ENCODE measurements at regions of chr2 and their contacts with region 1.

Region 1: GRCh38 chr2:43086451-43087221 is 139.8 kb downstream of the ZFP36L2 start:
- DNase-seq: peak; percentile 99
- H3K4me3 ChIP-seq: no peak overlapping the region
- H3K27ac ChIP-seq: peak overlapping the region; percentile 94
- H3K4me1 ChIP-seq: peaks cover 70% of the 10 kb centered on the region
- H3K27me3 ChIP-seq: no peaks in the 10 kb centered on the region
- CTCF ChIP-seq: no peak

Region 2: GRCh38 chr2:42987112-42987922 is 99.3 kb before region 1 on chr2:
- CTCF ChIA-PET with region 1: no interaction called
- dilution Hi-C with region 1: no loop called
- in situ Hi-C with region 1: no loop called
- intact Hi-C with region 1: loop called (anchors 5 kb)
- DNase-seq: peak; percentile 97
- H3K4me3 ChIP-seq: no peak overlapping the region
- H3K27ac ChIP-seq: peak overlapping the region; percentile 98
- H3K4me1 ChIP-seq: peaks cover 34% of the 10 kb centered on the region
- H3K27me3 ChIP-seq: no peaks in the 10 kb centered on the region
- CTCF ChIP-seq: no peak

Region 3: DNA sequence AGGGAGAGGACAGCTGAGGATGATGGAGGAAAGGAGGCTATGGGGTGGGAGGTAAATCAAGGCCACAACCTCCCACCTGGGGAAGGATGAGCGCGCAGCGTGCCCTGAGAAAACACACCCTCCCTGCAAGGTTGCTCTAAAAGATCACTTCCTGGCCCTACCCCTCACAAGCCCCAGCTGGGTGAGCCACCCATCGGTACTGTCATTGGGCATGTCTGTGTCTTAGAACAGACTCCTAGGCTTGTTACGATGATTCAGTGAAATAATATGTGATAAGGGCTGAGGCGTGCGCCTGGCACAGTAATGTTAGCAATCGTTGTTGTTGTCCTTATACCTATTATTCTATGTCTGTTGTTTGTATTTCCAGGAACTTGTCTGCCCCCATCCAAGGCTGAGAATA is 35.3 kb before region 1 on chr2:
- CTCF ChIA-PET with region 1: no interaction called
- dilution Hi-C with region 1: no loop called
- in situ Hi-C with region 1: no loop called
- intact Hi-C with region 1: loop called (anchors 1 kb)
- DNase-seq: peak; percentile 89
- H3K4me3 ChIP-seq: no peak overlapping the region
- H3K27ac ChIP-seq: peak overlapping the region; percentile 85
- H3K4me1 ChIP-seq: peaks cover 36% of the 10 kb centered on the region
- H3K27me3 ChIP-seq: no peaks in the 10 kb centered on the region
- CTCF ChIP-seq: no peak

Region 4: DNA sequence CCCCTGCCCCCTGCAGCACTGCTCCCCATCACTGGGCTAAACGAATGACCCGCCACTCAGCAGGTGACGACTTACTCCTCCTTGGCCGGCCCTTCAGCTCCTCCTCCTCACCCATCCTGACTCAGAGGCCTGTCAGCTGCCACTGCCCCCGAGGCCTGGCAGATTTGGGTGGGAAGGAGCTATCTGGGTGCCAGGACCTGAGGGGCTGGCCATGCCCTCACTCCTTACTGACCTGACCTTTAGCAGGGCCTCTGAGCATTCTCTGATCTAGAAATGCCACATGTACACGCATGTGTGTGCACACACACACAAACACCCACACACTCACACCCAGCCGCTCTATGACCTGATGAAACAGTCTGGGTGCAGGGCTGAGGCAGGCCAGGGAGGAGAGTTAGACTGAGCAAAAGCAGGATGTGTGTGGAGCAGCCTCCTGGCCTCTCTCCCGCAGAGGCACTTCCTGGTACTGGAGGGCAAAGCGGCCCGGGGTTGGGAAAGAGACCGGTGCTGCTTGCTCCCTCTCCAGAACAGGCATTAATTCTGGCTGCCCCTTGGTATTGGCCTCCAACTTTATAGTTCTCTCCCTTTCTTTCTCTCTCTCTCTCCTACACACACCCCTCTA is 71.7 kb after region 1 on chr2:
- CTCF ChIA-PET with region 1: no interaction called
- dilution Hi-C with region 1: no loop called
- in situ Hi-C with region 1: no loop called
- intact Hi-C with region 1: loop called (anchors 1 kb)
- DNase-seq: peak; percentile 94
- H3K4me3 ChIP-seq: no peak overlapping the region
- H3K27ac ChIP-seq: peak overlapping the region; percentile 93
- H3K4me1 ChIP-seq: peaks cover 52% of the 10 kb centered on the region
- H3K27me3 ChIP-seq: no peaks in the 10 kb centered on the region
- CTCF ChIP-seq: no peak

Region 5: GRCh38 chr2:43576981-43577892 is 490.6 kb after region 1 on chr2:
- CTCF ChIA-PET with region 1: interaction called, 10 read pairs
- dilution Hi-C with region 1: no loop called
- in situ Hi-C with region 1: no loop called
- intact Hi-C with region 1: no loop called
- DNase-seq: peak; percentile 27
- H3K4me3 ChIP-seq: no peak overlapping the region
- H3K27ac ChIP-seq: no peak overlapping the region
- H3K4me1 ChIP-seq: peaks cover 3% of the 10 kb centered on the region
- H3K27me3 ChIP-seq: no peaks in the 10 kb centered on the region
- CTCF ChIP-seq: peak; percentile 77 to 84

Measured in mammary epithelial cell (primary cell).